ENCODE measurements at regions of chr1 and their contacts with region 1.

Region 1: DNA sequence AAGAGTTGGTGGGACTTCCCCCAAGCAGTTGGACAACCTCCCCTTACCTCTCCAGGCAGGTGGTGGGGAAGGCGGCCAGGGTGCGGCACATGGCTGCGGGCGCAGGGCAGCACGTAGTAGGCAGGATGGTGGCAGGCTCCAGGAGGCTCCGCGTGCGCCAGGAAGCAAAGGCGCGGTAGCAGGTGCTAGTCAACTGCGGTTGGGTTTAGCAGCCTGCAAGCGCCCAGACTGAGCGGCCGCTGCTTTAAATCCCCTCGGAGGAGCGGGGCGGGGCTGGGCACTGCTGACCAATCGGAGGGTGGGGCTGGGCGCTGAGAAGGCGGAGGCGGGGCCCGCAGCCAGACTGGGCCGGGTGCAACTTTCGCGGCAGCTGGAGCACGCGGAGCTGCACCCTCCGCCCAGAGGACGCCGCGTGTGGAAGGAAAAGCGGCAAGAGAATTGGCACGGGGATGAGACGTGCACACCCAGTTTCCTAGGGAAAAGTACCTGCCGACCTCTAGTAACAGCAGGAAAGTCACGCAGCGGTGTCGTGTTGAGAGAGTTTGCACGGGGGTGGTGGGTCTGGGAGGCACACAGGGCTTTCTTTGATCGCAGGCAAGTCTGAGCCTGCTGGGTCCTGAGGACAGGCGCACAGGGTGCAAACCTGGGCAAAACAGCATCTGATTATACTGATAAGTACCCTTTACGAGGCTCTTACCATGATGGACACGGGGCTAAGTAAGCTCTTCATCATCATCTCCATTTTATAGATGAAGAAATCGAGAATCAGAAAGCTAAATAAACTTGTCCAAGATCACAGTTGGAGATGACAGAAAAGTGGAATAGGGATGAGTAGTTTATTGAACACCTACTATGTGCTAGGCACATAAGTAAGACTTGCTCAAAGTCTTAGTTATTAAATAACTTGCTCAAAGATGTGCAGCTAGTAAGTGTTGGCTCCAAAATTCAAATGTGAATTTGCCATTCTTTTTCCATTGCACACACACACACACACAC is at the start of gene RGS16:
- DNase-seq: peak; percentile 90 to 95 (median 93)
- H3K4me3 ChIP-seq: peak within 1 kb of the TSS; percentile 49
- H3K27ac ChIP-seq: peak within 1 kb of the TSS in 1 of 2 donors; percentile 32
- H3K4me1 ChIP-seq: peaks cover 6% of the 10 kb centered on the region
- H3K27me3 ChIP-seq: no peaks in the 10 kb centered on the region
- CTCF ChIP-seq: peak in 1 of 3 donors; percentile 7
- EP300 ChIP-seq: no peak
- POLR2A ChIP-seq: peak; percentile 59
- total RNA-seq, gene RGS16: 1.1 to 7.4 (median 2.5) TPM

Region 2: GRCh38 chr1:182674346-182675246 is 70.1 kb after region 1 on chr1:
- intact Hi-C with region 1: loop called in 1 of 4 experiments (anchors 5 kb)
- DNase-seq: peak in 3 of 5 donors; percentile 37 to 52 (median 45)
- H3K4me3 ChIP-seq: no peak overlapping the region
- H3K27ac ChIP-seq: peak overlapping the region in 1 of 2 donors; percentile 10
- H3K4me1 ChIP-seq: peaks cover 2% of the 10 kb centered on the region
- H3K27me3 ChIP-seq: no peaks in the 10 kb centered on the region
- CTCF ChIP-seq: no peak
- EP300 ChIP-seq: no peak
- POLR2A ChIP-seq: no peak

Region 3: GRCh38 chr1:183368202-183369108 is 764.0 kb after region 1 on chr1:
- intact Hi-C with region 1: no loop called
- DNase-seq: no peak
- H3K4me3 ChIP-seq: no peak overlapping the region
- H3K27ac ChIP-seq: no peak overlapping the region
- H3K4me1 ChIP-seq: no peaks in the 10 kb centered on the region
- H3K27me3 ChIP-seq: no peaks in the 10 kb centered on the region
- CTCF ChIP-seq: no peak
- EP300 ChIP-seq: no peak
- POLR2A ChIP-seq: no peak

Measured in ovary (tissue), 10 donors.